Endothelial cell of umbilical vein (primary cell): ENCODE measurements at regions of chr4 and their contacts with region 1.

Region 1: DNA sequence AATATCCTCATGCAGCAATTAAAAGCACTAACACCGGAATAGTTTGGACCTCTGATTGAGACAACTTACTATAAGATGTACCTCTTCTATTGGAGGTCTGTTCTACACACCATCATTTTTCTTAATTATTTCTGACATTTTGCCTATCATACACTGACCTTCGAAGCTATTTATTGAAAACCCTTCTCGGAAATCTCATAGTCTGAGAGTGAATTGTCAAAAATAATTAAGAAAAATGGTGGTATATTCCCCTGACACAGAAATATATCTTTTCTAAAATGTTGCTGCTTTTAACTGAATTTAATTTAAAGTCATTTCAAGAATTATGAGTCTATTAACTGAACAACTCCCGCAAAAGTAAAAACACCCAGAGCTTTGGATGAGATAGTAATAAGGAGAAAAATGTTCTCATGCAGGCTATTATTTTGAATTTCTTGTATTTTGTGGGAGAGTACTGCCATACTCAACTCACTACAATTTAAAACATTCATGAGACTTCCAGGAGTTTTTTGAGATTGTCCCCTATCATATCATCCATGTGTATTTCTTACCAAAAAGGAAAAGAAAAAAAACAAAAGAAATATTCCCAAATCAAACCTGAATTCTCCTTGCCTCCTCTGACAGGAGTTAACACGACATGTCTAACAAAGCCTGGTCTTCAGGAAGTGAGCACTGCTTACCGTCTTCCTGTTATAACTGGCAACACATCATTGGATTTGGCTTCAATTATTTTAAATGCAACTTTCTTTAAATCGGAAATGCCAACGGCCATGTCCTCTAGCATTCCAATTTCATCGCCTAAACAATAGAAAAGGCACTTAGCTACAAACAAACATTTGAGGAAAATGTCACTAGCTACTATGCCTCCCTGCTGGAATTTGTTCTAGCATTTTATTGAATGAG is 485.3 kb downstream of the IL15 start:
- DNase-seq: peak; percentile 92
- H3K4me3 ChIP-seq: peak overlapping the region in 1 of 3 experiments; percentile 23
- H3K27ac ChIP-seq: peak overlapping the region; percentile 100
- H3K4me1 ChIP-seq: peaks cover 30% of the 10 kb centered on the region
- H3K27me3 ChIP-seq: no peaks in the 10 kb centered on the region
- CTCF ChIP-seq: no peak
- POLR2A ChIP-seq: peak; percentile 46

Region 2: DNA sequence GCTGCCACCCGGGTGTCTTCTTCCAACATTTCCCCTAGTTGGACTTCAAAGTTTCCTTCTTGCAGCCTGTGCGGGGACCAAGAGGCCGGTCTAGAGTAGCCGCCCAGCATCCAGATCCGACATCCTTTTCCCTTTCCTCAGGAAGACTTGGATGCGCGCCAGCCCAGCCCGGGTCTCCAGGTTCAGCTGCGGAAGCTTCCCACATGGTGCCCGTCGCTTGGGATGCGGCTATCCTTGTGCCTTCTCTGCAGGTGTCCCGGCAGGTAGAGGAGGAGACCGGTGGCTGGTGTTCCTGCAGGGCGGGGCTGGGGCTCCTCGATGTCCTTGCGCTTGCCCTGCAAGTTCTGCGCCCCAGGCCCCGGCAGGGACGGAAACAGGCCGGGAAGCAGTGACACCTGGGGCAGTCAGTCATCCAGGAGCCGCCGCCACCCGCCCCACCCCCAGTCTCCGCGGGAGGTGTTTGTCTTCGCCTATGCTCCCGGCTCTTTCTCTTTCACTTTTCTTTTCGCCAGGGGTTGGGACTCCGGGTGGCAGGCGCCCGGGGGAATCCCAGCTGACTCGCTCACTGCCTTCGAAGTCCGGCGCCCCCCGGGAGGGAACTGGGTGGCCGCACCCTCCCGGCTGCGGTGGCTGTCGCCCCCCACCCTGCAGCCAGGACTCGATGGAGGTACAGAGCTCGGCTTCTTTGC is 485.5 kb before region 1 on chr4 and contains the start of gene IL15:
- CTCF ChIA-PET with region 1: no interaction called
- POLR2A ChIA-PET with region 1: no interaction called
- dilution Hi-C with region 1: no loop called
- intact Hi-C with region 1: loop called (anchors 2 kb)
- DNase-seq: peak; percentile 74
- H3K4me3 ChIP-seq: peak within 1 kb of the TSS; percentile 79 to 90 (median 86)
- H3K27ac ChIP-seq: peak within 1 kb of the TSS; percentile 25
- H3K4me1 ChIP-seq: peaks cover 8% of the 10 kb centered on the region
- H3K27me3 ChIP-seq: no peaks in the 10 kb centered on the region
- CTCF ChIP-seq: no peak
- POLR2A ChIP-seq: no peak
- total RNA-seq, gene IL15: 3.0 and 3.1 TPM in 2 replicates

Region 3: DNA sequence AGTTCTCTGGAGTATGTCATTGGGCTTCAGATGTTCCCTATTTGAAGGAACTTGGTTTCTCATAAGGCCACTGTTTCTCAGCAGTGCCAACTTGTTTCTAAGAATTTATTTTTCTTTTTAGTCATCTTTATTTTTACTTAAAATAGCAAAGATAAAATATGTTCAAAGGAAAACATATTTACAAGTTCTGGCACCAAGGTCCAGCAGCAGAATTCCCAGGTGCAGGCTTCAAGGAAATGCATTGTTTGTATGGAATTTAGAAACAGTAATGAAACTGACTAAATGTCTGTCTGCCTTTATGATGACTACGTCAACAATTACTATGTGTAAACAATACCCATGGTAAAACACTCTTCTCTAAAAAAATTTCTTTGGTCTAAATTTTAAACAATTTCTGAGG is 375.7 kb before region 1 on chr4:
- CTCF ChIA-PET with region 1: no interaction called
- POLR2A ChIA-PET with region 1: no interaction called
- dilution Hi-C with region 1: no loop called
- intact Hi-C with region 1: loop called (anchors 1 kb)
- DNase-seq: peak; percentile 78
- H3K4me3 ChIP-seq: no peak overlapping the region
- H3K27ac ChIP-seq: peak overlapping the region; percentile 20
- H3K4me1 ChIP-seq: peaks cover 9% of the 10 kb centered on the region
- H3K27me3 ChIP-seq: no peaks in the 10 kb centered on the region
- CTCF ChIP-seq: no peak
- POLR2A ChIP-seq: no peak

Region 4: DNA sequence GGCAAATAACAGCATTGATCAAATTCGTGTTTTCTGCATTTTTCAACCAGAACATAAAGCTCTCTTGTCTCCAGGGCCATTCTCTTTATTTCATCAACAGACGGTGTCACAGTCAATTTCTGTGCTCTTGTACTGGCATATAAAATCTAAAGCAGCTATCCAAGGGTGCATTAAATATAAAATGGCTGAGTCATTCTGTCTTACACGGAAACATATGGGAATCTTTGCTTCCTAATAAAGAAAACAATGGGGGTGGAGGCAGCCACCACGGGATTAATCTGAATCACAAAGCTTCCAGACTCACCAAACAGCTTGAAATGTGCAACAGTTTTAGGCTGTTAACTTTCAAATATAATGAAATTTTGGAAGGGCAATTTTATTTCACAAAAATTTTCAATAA is 352.7 kb before region 1 on chr4:
- CTCF ChIA-PET with region 1: interaction called, 5 read pairs
- POLR2A ChIA-PET with region 1: no interaction called
- dilution Hi-C with region 1: no loop called
- intact Hi-C with region 1: loop called (anchors 1 kb)
- DNase-seq: peak; percentile 93
- H3K4me3 ChIP-seq: no peak overlapping the region
- H3K27ac ChIP-seq: peak overlapping the region; percentile 87
- H3K4me1 ChIP-seq: peaks cover 13% of the 10 kb centered on the region
- H3K27me3 ChIP-seq: no peaks in the 10 kb centered on the region
- CTCF ChIP-seq: no peak
- POLR2A ChIP-seq: no peak

Region 5: GRCh38 chr4:142036795-142037583 is 84.7 kb before region 1 on chr4:
- CTCF ChIA-PET with region 1: interaction called, 8 read pairs
- POLR2A ChIA-PET with region 1: no interaction called
- dilution Hi-C with region 1: no loop called
- intact Hi-C with region 1: loop called (anchors 1 kb)
- DNase-seq: peak; percentile 46
- H3K4me3 ChIP-seq: no peak overlapping the region
- H3K27ac ChIP-seq: peak overlapping the region; percentile 11
- H3K4me1 ChIP-seq: peaks cover 12% of the 10 kb centered on the region
- H3K27me3 ChIP-seq: no peaks in the 10 kb centered on the region
- CTCF ChIP-seq: no peak
- POLR2A ChIP-seq: no peak

Region 6: GRCh38 chr4:143046454-143046853 is 924.8 kb after region 1 on chr4:
- CTCF ChIA-PET with region 1: no interaction called
- POLR2A ChIA-PET with region 1: no interaction called
- dilution Hi-C with region 1: no loop called
- intact Hi-C with region 1: no loop called
- DNase-seq: no peak
- H3K4me3 ChIP-seq: no peak overlapping the region
- H3K27ac ChIP-seq: no peak overlapping the region
- H3K4me1 ChIP-seq: no peaks in the 10 kb centered on the region
- H3K27me3 ChIP-seq: no peaks in the 10 kb centered on the region
- CTCF ChIP-seq: no peak
- POLR2A ChIP-seq: no peak